ENCODE measurements at regions of chr11 and their contacts with region 1.

Region 1: GRCh38 chr11:133082851-133083488 is 449.3 kb downstream of the OPCML start:
- DNase-seq: peak; percentile 28 to 75
- ATAC-seq: peak; percentile 88 to 95 (median 92)
- H3K4me3 ChIP-seq: peak overlapping the region; percentile 10 to 53 (median 43)
- H3K27ac ChIP-seq: no peak overlapping the region
- H3K4me1 ChIP-seq: peaks cover 0 to 6% (median 4%) of the 10 kb centered on the region in 9 donors
- H3K27me3 ChIP-seq: peaks cover 0 to 84% (median 68%) of the 10 kb centered on the region in 7 donors
- CTCF ChIP-seq: peak; percentile 54 to 97 (median 81)

Region 2: DNA sequence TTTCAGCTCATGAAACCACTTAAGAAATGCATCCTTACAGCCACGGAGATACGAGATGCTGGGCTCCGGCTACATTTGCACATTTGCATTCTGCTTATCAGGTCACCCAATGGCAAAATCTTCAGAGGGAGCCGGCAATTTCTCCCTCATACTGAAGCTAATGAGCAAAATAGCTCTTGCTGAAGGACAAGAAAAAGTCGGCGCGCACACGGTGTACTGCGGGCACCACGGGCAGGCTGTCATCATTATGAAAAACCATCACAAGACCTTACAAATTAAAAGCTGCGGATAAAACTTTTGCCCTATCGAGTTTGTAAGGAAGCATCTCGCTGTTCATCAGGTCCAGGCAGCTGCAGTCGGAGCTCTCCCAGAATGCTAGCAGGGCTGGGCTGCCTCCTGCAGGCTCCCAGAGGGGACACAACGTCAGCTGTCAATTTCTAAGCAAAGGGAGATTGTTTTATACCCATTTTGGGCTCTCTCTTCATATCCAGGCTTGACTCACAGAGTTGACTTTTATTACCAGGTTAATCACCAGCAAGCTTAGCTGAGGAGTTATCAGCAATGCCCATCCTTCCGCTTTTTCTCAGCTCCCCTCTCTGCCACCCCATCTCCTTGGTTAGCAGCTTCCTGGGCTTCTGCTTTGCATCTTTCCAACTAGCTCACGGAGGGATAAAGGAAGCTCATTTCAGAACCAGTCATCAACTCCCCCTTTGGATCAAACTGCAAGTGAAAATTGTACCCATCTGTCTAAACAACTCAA is 74.2 kb after region 1 on chr11:
- intact Hi-C with region 1: loop called (anchors 2 to 5 kb)
- DNase-seq: peak; percentile 13 to 37
- ATAC-seq: peak in 2 of 8 donors; percentile 16 to 67
- H3K4me3 ChIP-seq: no peak overlapping the region
- H3K27ac ChIP-seq: no peak overlapping the region
- H3K4me1 ChIP-seq: no peaks in the 10 kb centered on the region
- H3K27me3 ChIP-seq: peaks cover 0 to 84% (median 58%) of the 10 kb centered on the region in 7 donors
- CTCF ChIP-seq: peak; percentile 11 to 57 (median 35)

Region 3: DNA sequence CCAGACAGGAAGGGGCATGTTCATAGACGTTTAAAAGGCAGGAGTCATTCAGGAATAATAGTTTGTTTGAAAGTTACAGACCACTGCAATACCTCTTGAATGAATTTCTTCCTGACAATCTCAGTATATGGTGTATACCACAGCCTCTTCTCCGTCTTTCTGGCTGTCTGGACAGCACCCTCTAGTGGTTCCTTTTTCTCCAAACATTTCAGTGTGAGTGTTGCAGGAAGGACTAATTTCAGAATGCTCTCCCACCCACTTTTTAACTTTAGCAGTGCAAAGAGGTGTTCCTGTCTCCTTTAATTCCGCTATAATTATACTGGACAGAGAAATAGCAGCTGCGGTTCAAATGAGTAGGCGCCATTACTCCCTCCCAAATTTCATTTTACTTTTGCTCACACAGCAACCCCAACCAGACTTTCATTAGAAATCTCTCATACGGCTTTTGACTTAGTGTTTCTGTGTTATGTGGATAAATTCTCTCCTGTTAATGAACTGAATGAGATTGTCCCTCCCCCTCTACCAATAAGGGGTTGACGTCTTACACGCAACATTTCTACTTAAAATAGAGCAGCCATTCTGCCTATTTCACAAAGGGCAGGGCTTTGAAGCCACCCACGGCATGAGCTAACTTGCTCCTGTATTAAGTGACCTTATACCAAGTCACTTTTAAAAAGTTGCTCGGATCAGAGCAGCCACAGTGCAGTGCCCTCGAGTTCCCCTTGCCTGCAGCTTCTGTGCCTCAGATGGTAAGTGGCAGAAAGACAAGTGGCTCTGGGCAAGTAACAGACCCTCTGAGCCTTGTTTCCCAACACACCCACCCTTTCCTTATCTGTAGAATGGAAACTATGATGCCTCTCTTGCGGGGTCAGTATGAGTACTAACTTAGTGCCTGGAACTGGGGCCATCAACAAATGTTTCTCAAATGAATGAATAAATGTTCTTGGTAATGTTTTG is 80.8 kb after region 1 on chr11:
- intact Hi-C with region 1: loop called in 8 of 10 experiments (anchors 2 to 5 kb)
- DNase-seq: peak in 1 of 2 donors; percentile 24
- ATAC-seq: peak; percentile 63 to 95 (median 78)
- H3K4me3 ChIP-seq: peak overlapping the region in 3 of 10 donors; percentile 2 to 26 (median 16)
- H3K27ac ChIP-seq: peak overlapping the region in 1 of 10 donors; percentile 31
- H3K4me1 ChIP-seq: peaks cover 0 to 7% (median 0%) of the 10 kb centered on the region in 9 donors
- H3K27me3 ChIP-seq: peaks cover 0 to 44% (median 6%) of the 10 kb centered on the region in 7 donors
- CTCF ChIP-seq: peak; percentile 48 to 80 (median 75)

Region 4: DNA sequence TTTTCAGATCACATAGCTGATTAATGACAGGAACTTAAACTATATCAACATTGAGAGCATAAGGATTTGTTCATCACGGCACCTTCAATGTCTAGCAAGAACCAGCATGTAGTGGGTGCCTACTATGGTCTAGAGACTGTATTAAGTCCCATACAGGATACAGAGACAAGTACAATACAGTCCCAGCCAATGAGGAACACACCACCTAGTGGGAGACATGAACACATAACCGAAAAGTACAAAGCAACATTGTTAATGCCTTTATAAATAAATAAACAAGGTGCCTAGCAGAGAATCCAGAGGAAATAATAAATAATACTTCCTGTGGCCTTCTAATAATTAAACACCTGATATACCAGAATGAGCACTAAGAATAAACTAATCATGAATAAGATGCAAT is 537.0 kb after region 1 on chr11:
- intact Hi-C with region 1: loop called in 1 of 10 experiments (anchors 5 kb)
- DNase-seq: no peak
- ATAC-seq: peak in 2 of 8 donors; percentile 50 to 59
- H3K4me3 ChIP-seq: no peak overlapping the region
- H3K27ac ChIP-seq: no peak overlapping the region
- H3K4me1 ChIP-seq: no peaks in the 10 kb centered on the region
- H3K27me3 ChIP-seq: peaks cover 0 to 14% (median 0%) of the 10 kb centered on the region in 7 donors
- CTCF ChIP-seq: peak in 7 of 9 donors; percentile 29 to 54 (median 33)

Region 5: DNA sequence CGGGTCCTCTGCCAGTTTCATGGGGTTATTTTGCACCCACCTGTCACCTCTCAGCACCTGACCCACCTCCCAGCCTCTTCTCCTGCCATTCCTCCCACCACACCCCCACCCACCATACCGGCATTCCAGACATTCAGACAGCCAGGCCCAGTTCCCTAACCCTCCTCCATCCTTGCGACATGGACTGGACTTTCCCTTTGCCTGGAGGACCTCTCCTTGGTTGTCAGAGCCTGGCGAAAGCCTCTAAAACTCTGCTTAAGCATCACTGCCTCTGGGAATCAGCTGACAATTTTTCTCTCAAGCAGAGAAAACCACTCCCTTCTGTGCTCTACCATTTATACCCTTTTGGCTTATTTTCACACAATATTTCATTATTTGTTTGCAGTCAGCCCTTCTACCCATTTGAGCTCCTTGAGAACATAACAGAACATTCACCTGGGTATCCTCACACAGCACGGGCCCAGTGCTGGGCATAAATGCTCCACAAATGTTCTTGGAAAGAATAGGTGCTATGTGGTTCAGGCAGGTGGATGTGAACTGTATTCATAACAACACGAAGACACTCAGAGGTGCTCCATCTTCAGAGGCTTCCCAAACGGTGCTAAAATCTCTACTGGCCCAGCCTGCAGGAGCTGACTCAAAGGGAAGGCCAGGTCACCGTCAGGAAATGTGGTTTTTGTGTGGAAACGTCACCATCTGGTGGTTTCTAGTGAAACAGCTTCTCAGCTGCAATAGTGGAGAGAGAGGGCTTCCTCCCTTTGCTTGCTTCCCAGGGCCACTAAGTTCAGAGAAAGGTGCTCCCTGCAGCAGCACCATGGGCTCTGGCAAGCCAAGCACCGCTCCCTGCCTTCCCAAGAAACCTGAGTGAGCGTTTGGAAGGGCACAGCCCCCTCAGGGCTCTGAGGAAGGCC is 752.0 kb after region 1 on chr11:
- intact Hi-C with region 1: loop called in 9 of 10 experiments (anchors 1 to 5 kb)
- DNase-seq: peak in 1 of 2 donors; percentile 43
- ATAC-seq: peak; percentile 29 to 90 (median 86)
- H3K4me3 ChIP-seq: no peak overlapping the region
- H3K27ac ChIP-seq: no peak overlapping the region
- H3K4me1 ChIP-seq: no peaks in the 10 kb centered on the region
- H3K27me3 ChIP-seq: peaks cover 0 to 40% (median 3%) of the 10 kb centered on the region in 7 donors
- CTCF ChIP-seq: peak in 8 of 9 donors; percentile 46 to 79 (median 66)